ENCODE measurements at regions of chr9 and their contacts with region 1.

Region 1: GRCh38 chr9:128558431-128559310 is 6.3 kb downstream of the SPTAN1 start:
- DNase-seq: peak; percentile 95
- ATAC-seq: peak; percentile 50
- H3K4me3 ChIP-seq: peak overlapping the region; percentile 1; the same call in 1 of the 2 replicates
- H3K27ac ChIP-seq: peak overlapping the region; percentile 44
- H3K4me1 ChIP-seq: peaks cover 5% of the 10 kb centered on the region
- H3K27me3 ChIP-seq: no peaks in the 10 kb centered on the region
- CTCF ChIP-seq: no peak
- POLR2A ChIP-seq: no peak
- RAD21 ChIP-seq: peak; percentile 9; the same call in 1 of the 2 replicates

Region 2: GRCh38 chr9:128504485-128505413 is 53.9 kb before region 1 on chr9 and contains the start of gene GLE1:
- CTCF ChIA-PET with region 1: no interaction called
- POLR2A ChIA-PET with region 1: no interaction called
- dilution Hi-C with region 1: no loop called
- in situ Hi-C with region 1: no loop called
- intact Hi-C with region 1: loop called (anchors 2 kb)
- DNase-seq: peak; percentile 86
- ATAC-seq: peak; percentile 98
- H3K4me3 ChIP-seq: peak within 1 kb of the TSS; percentile 84
- H3K27ac ChIP-seq: peak within 1 kb of the TSS; percentile 68
- H3K4me1 ChIP-seq: peaks cover 4% of the 10 kb centered on the region
- H3K27me3 ChIP-seq: no peaks in the 10 kb centered on the region
- CTCF ChIP-seq: no peak
- POLR2A ChIP-seq: peak; percentile 75
- RAD21 ChIP-seq: no peak
- total RNA-seq, gene GLE1: 35.3 and 39.4 TPM in 2 replicates

Region 3: GRCh38 chr9:128635283-128636023 is 76.8 kb after region 1 on chr9:
- CTCF ChIA-PET with region 1: interaction called, 4 read pairs
- POLR2A ChIA-PET with region 1: no interaction called
- dilution Hi-C with region 1: no loop called
- in situ Hi-C with region 1: no loop called
- intact Hi-C with region 1: loop called (anchors 2 kb)
- DNase-seq: peak; percentile 94
- ATAC-seq: peak; percentile 92
- H3K4me3 ChIP-seq: no peak overlapping the region
- H3K27ac ChIP-seq: peak overlapping the region; percentile 98
- H3K4me1 ChIP-seq: peaks cover 13% of the 10 kb centered on the region
- H3K27me3 ChIP-seq: no peaks in the 10 kb centered on the region
- CTCF ChIP-seq: peak; percentile 90
- POLR2A ChIP-seq: no peak
- RAD21 ChIP-seq: peak; percentile 82

Measured in IMR-90 (cell line).